Breast epithelium (tissue), 4 donors: ENCODE measurements at regions of chr4 and their contacts with region 1.

Region 1: DNA sequence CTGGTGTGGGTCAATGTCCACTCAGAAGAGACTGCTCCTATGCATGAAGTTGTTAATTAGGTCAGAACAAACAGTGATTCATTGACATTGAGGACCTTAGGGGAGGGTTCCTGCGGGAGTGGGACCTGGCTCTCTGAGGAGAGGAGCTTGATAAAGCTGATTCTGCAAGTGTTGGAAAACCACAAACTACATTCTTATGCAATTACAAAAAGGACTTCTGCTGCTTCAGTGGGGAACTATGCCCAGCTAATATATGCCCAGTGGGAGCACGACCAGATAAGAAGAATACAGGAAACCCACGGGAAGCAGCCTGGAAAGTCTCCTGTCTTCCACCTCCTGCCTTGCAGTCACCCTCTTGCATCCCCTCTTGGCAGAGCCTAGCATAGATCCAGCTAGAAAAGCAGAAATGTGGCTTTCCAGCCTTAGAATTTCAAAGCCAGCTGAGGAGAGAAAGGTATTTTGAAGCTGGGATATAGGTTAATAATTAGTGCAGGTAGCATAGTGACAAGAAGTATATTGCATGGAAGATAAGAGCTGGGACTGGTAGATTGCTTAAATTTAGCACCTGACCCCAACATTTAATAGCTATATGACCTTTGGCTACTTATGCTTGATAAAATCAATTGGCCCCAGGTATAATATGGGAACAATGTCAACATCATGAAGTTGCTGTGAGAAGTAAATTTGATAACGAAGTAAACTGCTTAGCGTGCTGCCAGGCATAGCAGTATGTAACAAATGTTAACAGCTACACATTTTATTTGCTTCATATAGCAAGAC is 34.9 kb upstream of the UGT8 start:
- DNase-seq: no peak
- H3K4me3 ChIP-seq: no peak overlapping the region
- H3K27ac ChIP-seq: no peak overlapping the region
- H3K4me1 ChIP-seq: no peaks in the 10 kb centered on the region
- H3K27me3 ChIP-seq: no peaks in the 10 kb centered on the region
- CTCF ChIP-seq: no peak
- POLR2A ChIP-seq: no peak

Region 2: DNA sequence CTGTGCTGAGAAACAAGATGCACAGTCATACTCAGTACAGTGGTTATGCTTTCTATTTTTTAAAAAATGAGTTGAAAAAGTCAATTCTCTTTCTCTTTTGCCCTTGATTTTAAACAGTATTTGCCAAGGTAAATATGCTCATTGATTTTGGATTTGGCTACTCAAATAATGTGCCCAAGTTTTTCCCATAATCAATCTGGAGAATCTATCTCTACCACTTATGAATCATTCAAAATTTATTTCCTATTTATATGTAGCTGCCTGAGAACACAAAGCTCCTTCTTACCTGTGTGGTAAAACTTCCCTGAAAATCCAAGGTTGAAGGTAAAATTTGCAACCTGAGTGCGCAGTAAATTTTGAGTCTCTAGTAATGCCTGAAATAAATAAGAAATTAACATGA is 413.2 kb after region 1 on chr4:
- intact Hi-C with region 1: loop called (anchors 5 kb)
- DNase-seq: no peak
- H3K4me3 ChIP-seq: no peak overlapping the region
- H3K27ac ChIP-seq: no peak overlapping the region
- H3K4me1 ChIP-seq: no peaks in the 10 kb centered on the region
- H3K27me3 ChIP-seq: no peaks in the 10 kb centered on the region
- CTCF ChIP-seq: no peak
- POLR2A ChIP-seq: no peak